ENCODE measurements at regions of chr19 and their contacts with region 1.

Region 1: DNA sequence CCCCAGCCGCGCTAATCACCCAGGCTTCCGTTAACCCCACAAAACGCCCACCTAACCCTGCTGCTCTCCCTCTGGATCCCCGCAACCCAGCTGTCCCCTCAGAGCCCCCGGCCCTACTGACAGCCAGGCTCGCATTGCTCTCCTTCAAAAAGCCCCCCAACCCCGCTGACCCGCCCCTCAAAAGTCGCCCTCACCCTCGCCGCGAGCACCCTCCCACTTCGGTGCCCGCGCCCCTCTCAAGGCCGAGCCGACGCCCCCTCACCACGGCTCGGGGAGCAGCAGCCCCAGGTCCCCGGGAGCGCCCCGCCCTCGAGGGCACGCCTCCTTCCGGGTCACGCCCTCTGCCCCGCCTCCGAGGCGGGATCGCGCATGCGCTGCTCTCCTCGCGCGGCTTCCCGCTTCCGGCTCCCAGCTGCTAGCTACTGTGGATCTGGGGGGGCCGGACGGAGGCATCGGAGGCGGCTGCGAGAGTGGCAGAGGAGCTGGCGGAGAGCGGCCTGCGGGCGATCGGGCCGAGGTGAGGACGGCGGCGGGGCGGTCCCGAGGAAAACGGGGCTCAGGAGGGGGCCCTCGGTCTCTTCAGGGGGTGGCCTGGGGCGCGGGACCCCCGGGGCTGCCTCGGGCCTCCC is 46.1 kb downstream of the ARHGEF18 start:
- DNase-seq: peak; percentile 94
- H3K4me3 ChIP-seq: peak overlapping the region; percentile 82 to 98 (median 87)
- H3K27ac ChIP-seq: peak overlapping the region; percentile 78 to 81 (median 80)
- H3K4me1 ChIP-seq: peaks cover 0 to 51% (median 43%) of the 10 kb centered on the region in 4 donors
- H3K27me3 ChIP-seq: no peaks in the 10 kb centered on the region
- CTCF ChIP-seq: peak in 1 of 4 experiments; percentile 5
- EP300 ChIP-seq: no peak
- POLR2A ChIP-seq: peak in 1 of 2 donors; percentile 62

Region 2: GRCh38 chr19:7104747-7105447 is 289.9 kb before region 1 on chr19:
- intact Hi-C with region 1: loop called (anchors 5 kb)
- DNase-seq: no peak
- H3K4me3 ChIP-seq: no peak overlapping the region
- H3K27ac ChIP-seq: no peak overlapping the region
- H3K4me1 ChIP-seq: peaks cover 0 to 9% (median 8%) of the 10 kb centered on the region in 4 donors
- H3K27me3 ChIP-seq: no peaks in the 10 kb centered on the region
- CTCF ChIP-seq: no peak
- EP300 ChIP-seq: no peak
- POLR2A ChIP-seq: no peak

Region 3: GRCh38 chr19:7326105-7326877 is 68.6 kb before region 1 on chr19:
- intact Hi-C with region 1: no loop called
- DNase-seq: peak; percentile 4
- H3K4me3 ChIP-seq: no peak overlapping the region
- H3K27ac ChIP-seq: no peak overlapping the region
- H3K4me1 ChIP-seq: no peaks in the 10 kb centered on the region
- H3K27me3 ChIP-seq: no peaks in the 10 kb centered on the region
- CTCF ChIP-seq: no peak
- EP300 ChIP-seq: no peak
- POLR2A ChIP-seq: no peak

Region 4: DNA sequence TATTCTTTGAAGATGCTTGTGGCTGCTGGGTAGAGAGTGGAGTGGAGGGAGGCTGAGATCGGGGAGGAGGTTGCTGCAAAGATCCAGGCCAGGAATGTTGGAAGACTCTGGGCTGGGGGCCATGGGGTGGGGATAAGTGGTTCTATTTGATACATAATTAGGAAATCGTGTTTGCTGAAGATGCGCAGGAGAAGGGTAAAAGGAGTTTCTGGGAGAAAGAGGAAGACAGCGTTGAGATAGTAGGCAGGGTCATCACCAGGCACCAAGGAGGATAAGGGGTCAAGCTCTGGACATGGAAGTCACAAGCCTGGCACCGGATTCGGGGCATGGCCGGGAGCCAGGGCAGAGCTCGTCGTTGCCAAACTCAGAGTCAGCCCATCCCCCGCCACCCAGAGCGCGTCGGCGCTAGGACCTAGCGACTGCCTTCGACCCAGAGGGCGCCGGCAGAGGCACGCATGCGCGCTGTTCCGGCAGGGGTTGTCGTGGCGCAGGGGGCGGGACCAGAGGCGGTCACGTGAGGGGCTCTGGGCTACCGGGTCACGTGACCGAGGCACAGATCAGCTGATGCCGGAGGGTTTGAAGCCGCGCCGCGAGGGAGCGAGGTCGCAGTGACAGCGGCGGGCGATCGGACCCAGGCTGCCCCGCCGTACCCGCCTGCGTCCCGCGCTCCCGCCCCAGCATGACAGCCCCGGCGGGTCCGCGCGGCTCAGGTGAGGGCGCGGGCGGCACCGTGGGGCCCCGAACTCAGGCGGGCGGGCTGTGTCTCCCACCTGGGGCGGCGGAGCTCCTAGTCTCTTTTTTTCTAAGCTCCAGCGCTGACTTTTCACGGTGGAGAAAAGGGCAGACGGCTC is 127.5 kb after region 1 on chr19 and contains the start of gene MCOLN1:
- intact Hi-C with region 1: loop called (anchors 5 kb)
- DNase-seq: peak; percentile 100
- H3K4me3 ChIP-seq: peak within 1 kb of the TSS; percentile 67 to 96 (median 84)
- H3K27ac ChIP-seq: peak within 1 kb of the TSS; percentile 58 to 81 (median 76)
- H3K4me1 ChIP-seq: peaks cover 0 to 33% (median 27%) of the 10 kb centered on the region in 4 donors
- H3K27me3 ChIP-seq: no peaks in the 10 kb centered on the region
- CTCF ChIP-seq: no peak
- EP300 ChIP-seq: peak in 1 of 4 donors; percentile 66
- POLR2A ChIP-seq: no peak
- total RNA-seq, gene MCOLN1: 15.5 to 21.3 (median 17.1) TPM

Region 5: DNA sequence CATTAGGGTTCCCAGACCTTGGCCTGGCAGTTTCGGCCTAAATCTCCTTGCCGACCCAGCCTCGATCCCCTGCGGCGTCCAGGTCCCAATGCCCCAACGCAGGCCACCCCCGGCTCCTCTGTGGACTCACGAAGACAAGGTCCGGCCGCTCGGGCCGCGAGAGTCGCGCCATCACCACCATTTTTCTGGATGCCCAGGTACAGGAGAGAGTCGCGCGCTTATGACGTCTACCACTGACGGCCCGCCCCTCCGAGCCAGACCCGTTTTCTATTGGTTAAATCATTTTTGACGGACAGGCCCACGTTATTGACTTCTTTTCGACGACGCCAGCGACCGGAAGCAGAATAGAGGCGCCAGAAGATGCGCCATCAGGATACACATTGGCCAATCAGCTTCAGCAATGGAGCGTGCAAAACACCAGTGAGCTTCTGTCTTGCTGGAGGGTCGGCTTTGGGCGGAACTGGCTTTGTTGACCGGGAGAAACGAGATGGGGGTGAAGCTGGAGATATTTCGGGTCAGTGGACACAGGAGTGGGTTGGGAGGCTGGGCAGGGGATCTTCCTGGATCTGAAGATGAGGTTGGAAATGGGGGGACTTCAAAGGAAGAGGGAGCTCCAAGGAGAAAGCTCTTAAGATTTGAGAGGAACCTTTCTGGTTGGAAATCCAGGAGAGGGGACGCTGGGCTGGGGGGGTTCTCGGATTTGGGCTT is 234.7 kb after region 1 on chr19 and contains the starts of genes PET100 and XAB2:
- intact Hi-C with region 1: loop called (anchors 10 kb)
- DNase-seq: peak; percentile 99
- H3K4me3 ChIP-seq: peak within 1 kb of the TSS; percentile 78 to 98 (median 97)
- H3K27ac ChIP-seq: peak within 1 kb of the TSS; percentile 81 to 91 (median 88)
- H3K4me1 ChIP-seq: peaks cover 0 to 38% (median 33%) of the 10 kb centered on the region in 4 donors
- H3K27me3 ChIP-seq: no peaks in the 10 kb centered on the region
- CTCF ChIP-seq: no peak
- EP300 ChIP-seq: no peak
- POLR2A ChIP-seq: no peak
- total RNA-seq, gene PET100: 10.8 to 37.1 (median 30.1) TPM
- total RNA-seq, gene XAB2: 29.5 to 38.3 (median 33.8) TPM

Measured in sigmoid colon (tissue), 7 donors.